ENCODE measurements at regions of chr2 and their contacts with region 1.

Region 1: DNA sequence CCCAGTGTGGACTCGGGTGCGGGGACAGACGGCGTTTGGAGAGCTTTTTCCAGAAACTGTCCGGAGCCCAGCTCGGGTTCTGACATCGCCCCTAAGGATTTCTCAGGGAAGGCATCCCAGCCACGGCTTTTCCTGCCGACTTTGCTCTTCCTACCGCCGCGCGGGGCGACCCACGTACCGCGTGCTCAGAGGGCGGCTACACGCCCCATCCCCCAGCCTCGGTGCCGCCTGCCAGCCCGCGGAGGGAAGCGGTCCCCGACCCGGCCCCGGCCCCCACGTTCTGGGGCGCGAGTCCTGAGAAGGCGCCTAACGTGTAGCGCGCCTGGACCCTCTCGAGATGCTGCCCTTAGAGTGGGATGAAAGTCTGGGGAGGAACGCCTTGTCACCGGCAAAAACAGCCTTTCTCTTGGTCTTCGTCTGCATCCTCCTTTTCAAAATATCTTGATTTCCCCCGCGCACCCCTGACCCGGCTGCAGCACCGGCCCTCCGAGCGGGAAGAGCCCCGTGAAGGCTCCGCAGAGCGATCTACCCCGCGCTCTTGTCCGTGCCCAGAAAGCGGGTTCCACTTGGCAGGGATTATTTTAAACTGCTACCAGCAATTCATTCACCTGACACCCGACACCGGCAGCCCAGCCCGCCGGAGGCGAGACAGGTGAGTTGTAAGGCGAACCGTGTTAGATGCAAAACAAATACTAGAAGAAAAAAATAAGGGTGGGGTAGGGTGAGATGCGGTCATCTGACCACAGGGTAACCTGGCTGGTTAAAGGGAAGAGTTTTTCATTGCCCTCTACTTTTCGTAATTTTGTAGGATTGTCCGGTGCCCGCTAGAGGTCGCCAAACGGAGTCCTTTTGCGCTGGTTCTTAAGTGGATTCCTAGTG is 812 bp upstream of the KCNG3 start:
- DNase-seq: peak; percentile 52 to 77
- ATAC-seq: peak; percentile 51 to 90 (median 64)
- H3K4me3 ChIP-seq: peak overlapping the region; percentile 74
- H3K27ac ChIP-seq: no peak overlapping the region
- H3K4me1 ChIP-seq: no peaks in the 10 kb centered on the region
- H3K27me3 ChIP-seq: peaks cover 4 to 69% (median 17%) of the 10 kb centered on the region in 3 donors
- CTCF ChIP-seq: peak; percentile 83

Region 2: GRCh38 chr2:42367835-42368234 is 126.8 kb before region 1 on chr2:
- intact Hi-C with region 1: no loop called
- DNase-seq: no peak
- ATAC-seq: no peak
- H3K4me3 ChIP-seq: no peak overlapping the region
- H3K27ac ChIP-seq: no peak overlapping the region
- H3K4me1 ChIP-seq: no peaks in the 10 kb centered on the region
- H3K27me3 ChIP-seq: no peaks in the 10 kb centered on the region
- CTCF ChIP-seq: no peak

Region 3: DNA sequence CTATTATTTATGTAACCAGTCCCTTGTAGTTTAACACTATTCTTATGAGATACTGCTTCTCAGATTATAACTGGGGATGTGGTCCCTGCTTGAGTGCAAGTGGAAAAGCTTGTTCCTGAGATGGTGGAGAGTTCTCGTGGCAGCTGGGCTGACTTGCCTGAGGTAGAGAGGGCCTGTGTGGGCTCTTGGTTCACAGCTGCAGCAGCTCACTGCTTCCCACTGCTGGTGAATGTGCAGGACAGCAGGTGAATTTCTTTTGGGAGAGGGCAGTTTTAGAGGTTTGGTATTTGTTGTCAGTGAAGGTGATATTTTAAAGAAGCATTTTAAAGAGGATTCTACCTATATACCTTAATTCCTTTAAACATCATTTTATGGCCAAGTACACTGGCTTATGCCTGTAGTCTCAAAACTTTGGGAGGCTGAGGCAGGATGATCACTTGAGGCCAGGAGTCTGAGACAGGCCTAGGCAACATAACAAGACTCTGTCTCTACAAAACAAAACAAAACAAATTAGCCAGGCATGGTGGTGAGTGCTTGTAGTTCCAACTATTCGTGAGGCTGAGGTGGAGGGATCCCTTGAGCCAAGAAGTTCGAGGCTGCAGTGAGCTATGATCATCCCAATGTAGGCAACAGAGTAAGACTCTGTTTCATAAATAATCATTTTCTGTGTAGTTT is 168.6 kb after region 1 on chr2:
- intact Hi-C with region 1: loop called (anchors 2 to 5 kb)
- DNase-seq: peak; percentile 47 to 76
- ATAC-seq: peak; percentile 71 to 93 (median 88)
- H3K4me3 ChIP-seq: no peak overlapping the region
- H3K27ac ChIP-seq: no peak overlapping the region
- H3K4me1 ChIP-seq: no peaks in the 10 kb centered on the region
- H3K27me3 ChIP-seq: no peaks in the 10 kb centered on the region
- CTCF ChIP-seq: peak; percentile 94

Region 4: DNA sequence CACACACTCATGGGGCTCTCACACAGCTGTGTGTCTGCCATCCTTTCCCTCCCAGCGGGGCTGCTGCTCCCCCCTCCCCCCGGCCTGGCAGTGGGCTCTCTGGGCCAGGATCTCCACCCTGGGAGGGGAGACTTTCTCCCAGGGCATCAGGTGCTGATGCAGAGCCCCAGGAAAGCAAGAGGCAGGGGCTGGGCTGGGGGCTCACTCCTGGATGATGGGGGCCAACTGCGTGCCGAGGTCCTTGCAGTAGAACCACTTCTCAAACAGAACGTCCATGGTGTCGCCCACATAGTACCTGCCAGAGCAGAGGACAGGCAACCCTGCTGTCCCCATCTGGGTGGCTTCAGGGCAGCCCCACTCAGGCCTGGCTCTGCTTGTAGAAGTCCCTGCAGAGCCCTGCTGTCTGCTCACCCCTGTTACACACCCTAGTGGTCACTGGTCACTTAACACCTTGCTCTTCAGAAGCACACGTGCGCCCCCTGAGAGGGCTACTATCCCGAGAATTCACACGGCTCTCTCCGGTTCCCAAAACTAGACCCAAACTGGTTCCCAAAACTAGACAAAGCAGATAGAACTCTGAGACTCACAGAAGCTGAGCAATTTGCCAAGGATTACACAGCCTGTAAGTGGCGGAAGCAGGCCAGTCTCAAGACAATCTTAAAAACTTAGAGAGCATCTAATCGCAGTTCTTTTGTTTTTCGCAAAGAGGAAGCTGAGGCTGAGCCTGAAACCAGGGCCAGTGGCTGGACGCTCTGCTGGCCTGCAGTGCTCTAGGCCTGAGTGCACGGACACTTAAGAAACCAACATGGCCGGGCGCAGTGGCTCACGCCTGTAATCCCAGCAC is 275.9 kb after region 1 on chr2:
- intact Hi-C with region 1: loop called in 1 of 2 experiments (anchors 10 kb)
- DNase-seq: no peak
- ATAC-seq: peak; percentile 73 to 93 (median 84)
- H3K4me3 ChIP-seq: no peak overlapping the region
- H3K27ac ChIP-seq: no peak overlapping the region
- H3K4me1 ChIP-seq: no peaks in the 10 kb centered on the region
- H3K27me3 ChIP-seq: no peaks in the 10 kb centered on the region
- CTCF ChIP-seq: peak; percentile 48